ENCODE measurements at regions of chr3 and their contacts with region 1.

Region 1: GRCh38 chr3:138118612-138119422 is 3.4 kb upstream of the DZIP1L start:
- DNase-seq: peak; percentile 74
- H3K4me3 Mint-ChIP-seq: no peak overlapping the region
- H3K27ac Mint-ChIP-seq: no peak overlapping the region
- H3K4me1 Mint-ChIP-seq: peaks cover 7% of the 10 kb centered on the region
- H3K27me3 Mint-ChIP-seq: peaks cover 56% of the 10 kb centered on the region

Region 2: GRCh38 chr3:138068579-138069174 is 50.1 kb before region 1 on chr3:
- CTCF ChIA-PET with region 1: interaction called, 248 read pairs
- DNase-seq: peak; percentile 86
- H3K4me3 Mint-ChIP-seq: no peak overlapping the region
- H3K27ac Mint-ChIP-seq: no peak overlapping the region
- H3K4me1 Mint-ChIP-seq: peaks cover 7% of the 10 kb centered on the region
- H3K27me3 Mint-ChIP-seq: peaks cover 49% of the 10 kb centered on the region

Region 3: GRCh38 chr3:138082085-138082991 is 36.5 kb before region 1 on chr3:
- CTCF ChIA-PET with region 1: interaction called, 27 read pairs
- DNase-seq: peak; percentile 49
- H3K4me3 Mint-ChIP-seq: peak overlapping the region; percentile 48
- H3K27ac Mint-ChIP-seq: peak overlapping the region; percentile 87
- H3K4me1 Mint-ChIP-seq: peaks cover 39% of the 10 kb centered on the region
- H3K27me3 Mint-ChIP-seq: peaks cover 43% of the 10 kb centered on the region

Region 4: GRCh38 chr3:138108099-138108498 is 10.7 kb before region 1 on chr3:
- CTCF ChIA-PET with region 1: interaction called, 10 read pairs
- DNase-seq: no peak
- H3K4me3 Mint-ChIP-seq: no peak overlapping the region
- H3K27ac Mint-ChIP-seq: no peak overlapping the region
- H3K4me1 Mint-ChIP-seq: no peaks in the 10 kb centered on the region
- H3K27me3 Mint-ChIP-seq: peaks cover 21% of the 10 kb centered on the region